IMR-90 (cell line): ENCODE measurements at regions of chr12 and their contacts with region 1.

Region 1: GRCh38 chr12:96516472-96517430 is 27.4 kb downstream of the CFAP54 start:
- DNase-seq: peak; percentile 85
- ATAC-seq: peak; percentile 79
- H3K4me3 ChIP-seq: no peak overlapping the region
- H3K27ac ChIP-seq: no peak overlapping the region
- H3K4me1 ChIP-seq: peaks cover 4% of the 10 kb centered on the region
- H3K27me3 ChIP-seq: no peaks in the 10 kb centered on the region
- CTCF ChIP-seq: peak; percentile 76
- POLR2A ChIP-seq: no peak
- RAD21 ChIP-seq: peak; percentile 86

Region 2: DNA sequence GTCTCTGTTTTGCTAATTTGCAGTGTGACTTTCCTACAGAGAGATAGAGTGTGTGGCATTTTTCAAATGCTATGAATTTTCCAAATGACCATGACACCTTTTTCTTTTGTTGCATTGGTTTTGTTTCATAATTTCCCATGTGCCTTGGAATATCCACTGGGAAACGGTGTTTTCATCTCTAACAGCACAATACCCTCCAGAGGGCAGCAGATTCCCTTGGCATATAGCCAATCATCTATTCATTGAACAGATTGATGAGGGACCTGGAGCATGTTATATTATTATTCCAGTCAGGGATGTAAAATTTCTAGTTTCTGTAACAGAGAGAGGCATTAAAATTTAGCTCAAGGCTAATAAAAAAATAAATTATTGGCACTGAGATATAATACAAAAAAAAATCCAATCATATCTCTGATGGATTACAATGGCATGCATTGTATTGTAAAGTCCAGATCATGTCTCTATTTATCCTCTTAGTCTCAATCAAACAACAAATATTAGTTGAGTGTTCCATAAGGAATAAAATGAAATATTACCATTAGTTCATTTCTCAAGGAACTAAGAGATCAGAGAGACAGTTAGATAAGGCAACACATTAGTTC is 696.5 kb before region 1 on chr12:
- CTCF ChIA-PET with region 1: no interaction called
- POLR2A ChIA-PET with region 1: no interaction called
- dilution Hi-C with region 1: no loop called
- in situ Hi-C with region 1: no loop called
- intact Hi-C with region 1: loop called (anchors 5 kb)
- DNase-seq: peak; percentile 62
- ATAC-seq: peak; percentile 42; the same call in 1 of the 2 replicates
- H3K4me3 ChIP-seq: no peak overlapping the region
- H3K27ac ChIP-seq: no peak overlapping the region
- H3K4me1 ChIP-seq: no peaks in the 10 kb centered on the region
- H3K27me3 ChIP-seq: no peaks in the 10 kb centered on the region; the same call in 1 of the 2 replicates
- CTCF ChIP-seq: peak; percentile 61
- POLR2A ChIP-seq: no peak
- RAD21 ChIP-seq: peak; percentile 43

Region 3: GRCh38 chr12:95918194-95918993 is 598.4 kb before region 1 on chr12:
- CTCF ChIA-PET with region 1: no interaction called
- POLR2A ChIA-PET with region 1: no interaction called
- dilution Hi-C with region 1: no loop called
- in situ Hi-C with region 1: no loop called
- intact Hi-C with region 1: loop called (anchors 1 kb)
- DNase-seq: peak; percentile 42
- ATAC-seq: peak; percentile 98
- H3K4me3 ChIP-seq: no peak overlapping the region
- H3K27ac ChIP-seq: no peak overlapping the region
- H3K4me1 ChIP-seq: no peaks in the 10 kb centered on the region
- H3K27me3 ChIP-seq: peaks cover 7% of the 10 kb centered on the region
- CTCF ChIP-seq: peak; percentile 73
- POLR2A ChIP-seq: no peak
- RAD21 ChIP-seq: peak; percentile 66

Region 4: GRCh38 chr12:96015672-96016071 is 501.1 kb before region 1 on chr12:
- CTCF ChIA-PET with region 1: interaction called, 3 read pairs
- POLR2A ChIA-PET with region 1: no interaction called
- dilution Hi-C with region 1: no loop called
- in situ Hi-C with region 1: no loop called
- intact Hi-C with region 1: loop called (anchors 2 kb)
- DNase-seq: peak; percentile 22
- ATAC-seq: peak; percentile 64
- H3K4me3 ChIP-seq: no peak overlapping the region
- H3K27ac ChIP-seq: no peak overlapping the region
- H3K4me1 ChIP-seq: no peaks in the 10 kb centered on the region
- H3K27me3 ChIP-seq: no peaks in the 10 kb centered on the region
- CTCF ChIP-seq: peak; percentile 32
- POLR2A ChIP-seq: no peak
- RAD21 ChIP-seq: peak; percentile 32

Region 5: GRCh38 chr12:96061864-96062453 is 454.8 kb before region 1 on chr12:
- CTCF ChIA-PET with region 1: interaction called, 4 read pairs
- POLR2A ChIA-PET with region 1: no interaction called
- dilution Hi-C with region 1: loop called (anchors 10 kb)
- in situ Hi-C with region 1: loop called (anchors 5 kb)
- intact Hi-C with region 1: loop called (anchors 1 kb)
- DNase-seq: peak; percentile 87
- ATAC-seq: peak; percentile 95
- H3K4me3 ChIP-seq: no peak overlapping the region
- H3K27ac ChIP-seq: no peak overlapping the region
- H3K4me1 ChIP-seq: no peaks in the 10 kb centered on the region
- H3K27me3 ChIP-seq: no peaks in the 10 kb centered on the region
- CTCF ChIP-seq: peak; percentile 93
- POLR2A ChIP-seq: no peak
- RAD21 ChIP-seq: peak; percentile 97

Region 6: DNA sequence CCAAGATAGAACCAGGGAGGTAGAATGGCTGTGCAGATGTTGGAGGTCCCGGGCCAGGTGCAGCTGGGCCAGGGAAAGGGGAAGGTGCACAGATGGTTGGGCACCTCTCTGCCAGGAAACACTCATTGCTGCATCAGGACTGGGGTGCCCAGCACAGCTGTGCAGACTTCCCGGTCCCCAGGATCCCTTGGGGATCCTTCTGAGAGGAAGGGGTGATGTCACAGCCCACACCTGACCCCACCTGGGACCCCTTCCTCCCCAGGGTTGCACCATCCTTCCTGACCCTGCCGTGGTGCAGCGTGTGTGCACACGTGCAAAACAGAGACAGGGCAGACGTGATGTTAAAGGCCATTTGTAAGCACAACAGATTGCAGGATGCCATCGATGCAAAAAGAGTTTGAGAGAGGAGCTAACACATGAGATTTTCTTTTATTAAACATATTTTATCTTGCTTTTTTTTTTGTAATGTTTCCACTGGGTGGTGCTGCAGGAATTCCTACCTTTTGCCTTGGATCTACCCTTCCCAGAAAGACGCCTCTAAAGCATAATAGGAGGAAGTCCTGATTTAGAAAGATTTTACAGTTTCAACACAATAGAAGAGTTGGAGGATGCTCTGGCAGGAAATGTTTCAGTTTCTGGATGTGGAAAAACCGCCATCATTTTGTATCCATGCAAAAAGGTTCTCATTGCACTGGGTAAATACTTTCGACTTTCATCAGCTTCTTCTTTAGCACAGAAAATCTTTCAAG is 307.8 kb before region 1 on chr12:
- CTCF ChIA-PET with region 1: no interaction called
- POLR2A ChIA-PET with region 1: no interaction called
- dilution Hi-C with region 1: no loop called
- in situ Hi-C with region 1: loop called (anchors 10 kb)
- intact Hi-C with region 1: no loop called
- DNase-seq: no peak
- ATAC-seq: no peak
- H3K4me3 ChIP-seq: no peak overlapping the region
- H3K27ac ChIP-seq: no peak overlapping the region
- H3K4me1 ChIP-seq: peaks cover 13% of the 10 kb centered on the region
- H3K27me3 ChIP-seq: no peaks in the 10 kb centered on the region
- CTCF ChIP-seq: 0 out of 2 replicates have a peak, but pooled peaks have one; percentile 12
- POLR2A ChIP-seq: no peak
- RAD21 ChIP-seq: no peak

Region 7: DNA sequence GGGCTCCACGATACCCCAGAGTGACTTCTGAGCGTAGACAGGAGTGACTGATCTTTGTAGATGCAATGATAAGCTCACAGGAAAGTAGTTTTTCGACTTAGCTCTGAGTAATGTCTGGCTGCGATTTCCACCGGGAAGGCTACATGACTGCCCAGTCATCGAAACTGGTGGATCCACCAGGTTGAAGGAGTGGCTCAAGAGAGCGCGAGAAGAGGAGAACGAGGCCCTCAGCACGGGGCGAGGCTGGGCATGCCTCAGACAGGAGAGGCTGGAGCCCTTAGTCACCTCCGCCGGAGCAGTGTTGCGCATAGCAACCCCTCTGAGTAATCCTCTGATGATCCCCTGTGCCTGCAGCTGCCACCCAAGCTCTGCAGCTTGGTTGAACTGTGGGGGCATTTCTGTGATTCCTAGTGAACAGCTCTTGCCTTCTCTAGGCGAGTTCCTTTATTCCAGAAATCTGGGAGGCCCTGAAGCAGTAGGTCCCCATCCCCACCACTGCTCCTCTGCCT is 297.0 kb before region 1 on chr12:
- CTCF ChIA-PET with region 1: interaction called, 7 read pairs
- POLR2A ChIA-PET with region 1: no interaction called
- dilution Hi-C with region 1: no loop called
- in situ Hi-C with region 1: no loop called
- intact Hi-C with region 1: loop called (anchors 1 kb)
- DNase-seq: peak; percentile 98
- ATAC-seq: peak; percentile 96
- H3K4me3 ChIP-seq: no peak overlapping the region
- H3K27ac ChIP-seq: peak overlapping the region; percentile 83
- H3K4me1 ChIP-seq: peaks cover 14% of the 10 kb centered on the region
- H3K27me3 ChIP-seq: no peaks in the 10 kb centered on the region
- CTCF ChIP-seq: no peak
- POLR2A ChIP-seq: peak; percentile 60; the same call in 1 of the 2 replicates
- RAD21 ChIP-seq: peak; percentile 27